Heart right ventricle (tissue), 16 donors: ENCODE measurements at regions of chr17 and their contacts with region 1.

Region 1: GRCh38 chr17:6677158-6677831 is 25.7 kb downstream of the C17orf100 start:
- DNase-seq: no peak
- ATAC-seq: no peak
- H3K4me3 ChIP-seq: no peak overlapping the region
- H3K27ac ChIP-seq: no peak overlapping the region
- H3K4me1 ChIP-seq: no peaks in the 10 kb centered on the region
- H3K27me3 ChIP-seq: peaks cover 4 to 46% (median 24%) of the 10 kb centered on the region in 7 donors
- CTCF ChIP-seq: no peak

Region 2: GRCh38 chr17:6599364-6599763 is 77.9 kb before region 1 on chr17:
- intact Hi-C with region 1: no loop called
- DNase-seq: no peak
- ATAC-seq: peak in 7 of 8 donors; percentile 28 to 75 (median 56)
- H3K4me3 ChIP-seq: no peak overlapping the region
- H3K27ac ChIP-seq: peak overlapping the region in 1 of 10 donors; percentile 69
- H3K4me1 ChIP-seq: peaks cover 0 to 29% (median 3%) of the 10 kb centered on the region in 9 donors
- H3K27me3 ChIP-seq: no peaks in the 10 kb centered on the region
- CTCF ChIP-seq: no peak

Region 3: GRCh38 chr17:6648181-6648580 is 29.1 kb before region 1 on chr17:
- intact Hi-C with region 1: no loop called
- DNase-seq: no peak
- ATAC-seq: no peak
- H3K4me3 ChIP-seq: no peak overlapping the region
- H3K27ac ChIP-seq: no peak overlapping the region
- H3K4me1 ChIP-seq: peaks cover 8 to 48% (median 27%) of the 10 kb centered on the region in 9 donors
- H3K27me3 ChIP-seq: peaks cover 0 to 14% (median 0%) of the 10 kb centered on the region in 7 donors
- CTCF ChIP-seq: peak in 1 of 9 donors; percentile 21

Region 4: GRCh38 chr17:6660805-6661463 is 16.4 kb before region 1 on chr17:
- intact Hi-C with region 1: no loop called
- DNase-seq: no peak
- ATAC-seq: peak in 3 of 8 donors; percentile 38 to 59 (median 57)
- H3K4me3 ChIP-seq: no peak overlapping the region
- H3K27ac ChIP-seq: no peak overlapping the region
- H3K4me1 ChIP-seq: peaks cover 0 to 19% (median 0%) of the 10 kb centered on the region in 9 donors
- H3K27me3 ChIP-seq: peaks cover 0 to 59% (median 41%) of the 10 kb centered on the region in 7 donors
- CTCF ChIP-seq: no peak

Region 5: GRCh38 chr17:6831661-6832263 is 154.5 kb after region 1 on chr17 and contains the start of gene TEKT1:
- intact Hi-C with region 1: loop called in 1 of 10 experiments (anchors 10 kb)
- DNase-seq: peak; percentile 68 to 79
- ATAC-seq: peak; percentile 61 to 94 (median 90)
- H3K4me3 ChIP-seq: peak within 1 kb of the TSS in 9 of 10 donors; percentile 5 to 48 (median 37)
- H3K27ac ChIP-seq: no peak within 1 kb of the TSS
- H3K4me1 ChIP-seq: peaks cover 0 to 13% (median 0%) of the 10 kb centered on the region in 9 donors
- H3K27me3 ChIP-seq: peaks cover 5 to 97% (median 73%) of the 10 kb centered on the region in 7 donors
- CTCF ChIP-seq: no peak
- total RNA-seq, gene TEKT1: not detected